ENCODE measurements at regions of chr6 and their contacts with region 1.

Region 1: GRCh38 chr6:16481697-16482399 is 243.5 kb downstream of the GMPR start:
- DNase-seq: peak; percentile 84
- ATAC-seq: peak; percentile 79
- H3K4me3 Mint-ChIP-seq: peak overlapping the region; percentile 6
- H3K27ac Mint-ChIP-seq: peak overlapping the region; percentile 96
- H3K4me1 Mint-ChIP-seq: peaks cover 86% of the 10 kb centered on the region
- H3K27me3 Mint-ChIP-seq: no peaks in the 10 kb centered on the region
- CTCF ChIP-seq: no peak

Region 2: DNA sequence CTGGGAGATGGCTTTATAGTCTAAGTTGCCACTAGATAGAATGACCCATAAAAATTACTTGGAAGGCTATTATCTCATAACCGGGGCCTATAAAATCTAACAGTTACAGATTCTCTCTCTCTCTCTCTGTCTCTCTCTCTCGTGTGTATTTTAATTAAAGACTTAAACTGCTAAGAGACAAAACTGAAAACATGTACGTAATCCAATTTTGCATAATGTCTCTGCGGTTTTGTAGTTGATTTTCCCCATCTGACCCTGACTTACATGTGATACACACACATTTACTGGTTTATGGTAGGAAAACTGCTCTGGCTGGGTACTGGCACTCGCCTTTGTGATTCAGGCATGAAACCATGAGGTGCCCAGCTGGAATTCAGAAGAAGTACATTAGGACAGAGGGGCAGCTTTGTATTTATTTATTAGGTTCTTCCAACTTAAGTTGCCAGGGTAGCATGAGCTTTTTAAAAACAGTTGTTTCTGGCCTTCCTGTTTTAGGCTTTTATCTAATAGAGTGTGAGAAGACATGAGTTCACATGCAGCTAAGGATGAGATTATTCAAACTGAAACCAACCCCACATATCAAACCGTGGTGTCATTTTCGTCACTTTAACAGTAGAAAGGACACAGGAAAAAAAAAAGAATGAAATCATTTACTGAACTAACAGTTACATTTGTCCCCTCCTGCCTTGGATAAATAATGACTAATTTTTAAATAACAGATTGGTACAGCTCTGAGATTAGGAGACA is 61.0 kb before region 1 on chr6:
- CTCF ChIA-PET with region 1: interaction called, 4 read pairs
- POLR2A ChIA-PET with region 1: interaction called, 4 read pairs
- intact Hi-C with region 1: loop called (anchors 5 kb)
- DNase-seq: peak; percentile 63
- ATAC-seq: peak; percentile 87
- H3K4me3 Mint-ChIP-seq: peak overlapping the region; percentile 25
- H3K27ac Mint-ChIP-seq: peak overlapping the region; percentile 96
- H3K4me1 Mint-ChIP-seq: peaks cover 41% of the 10 kb centered on the region
- H3K27me3 Mint-ChIP-seq: no peaks in the 10 kb centered on the region
- CTCF ChIP-seq: no peak

Region 3: DNA sequence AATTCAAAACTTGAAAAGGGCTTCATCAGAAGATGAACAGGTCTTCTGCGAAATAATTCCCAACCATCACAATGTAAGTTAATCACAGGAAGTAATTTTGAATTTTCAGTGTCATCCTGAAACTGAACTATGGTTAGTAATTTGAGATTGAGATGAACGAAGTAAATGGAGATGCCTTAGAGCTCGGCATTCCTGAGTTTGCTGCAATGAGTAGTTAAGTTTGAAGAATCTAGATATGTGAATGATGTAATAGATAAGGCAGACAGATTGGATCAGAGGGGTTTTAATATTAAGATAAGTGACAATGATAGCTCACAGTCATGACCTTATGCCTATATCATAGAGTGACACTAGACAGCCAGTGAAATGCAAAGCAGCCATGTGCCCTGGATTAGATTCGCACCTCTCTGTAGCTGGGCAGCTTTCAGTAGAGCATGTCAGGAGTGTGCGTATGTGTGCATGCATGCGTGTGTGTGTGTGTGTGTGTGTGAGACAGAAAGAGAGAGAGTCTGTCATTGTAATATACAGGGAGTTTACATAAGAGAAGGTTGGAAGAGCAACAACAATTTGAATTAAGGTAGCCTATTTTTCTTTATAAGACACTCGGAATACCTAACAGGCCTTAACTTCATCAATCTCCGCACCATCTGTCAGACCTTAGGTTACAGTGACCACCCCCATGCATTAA is 10.5 kb before region 1 on chr6:
- CTCF ChIA-PET with region 1: interaction called, 7 read pairs
- POLR2A ChIA-PET with region 1: interaction called, 16 read pairs
- intact Hi-C with region 1: no loop called
- DNase-seq: peak; percentile 55
- ATAC-seq: peak; percentile 51
- H3K4me3 Mint-ChIP-seq: no peak overlapping the region
- H3K27ac Mint-ChIP-seq: peak overlapping the region; percentile 86
- H3K4me1 Mint-ChIP-seq: peaks cover 78% of the 10 kb centered on the region
- H3K27me3 Mint-ChIP-seq: no peaks in the 10 kb centered on the region
- CTCF ChIP-seq: no peak

Region 4: GRCh38 chr6:16527691-16528090 is 45.8 kb after region 1 on chr6:
- CTCF ChIA-PET with region 1: no interaction called
- POLR2A ChIA-PET with region 1: no interaction called
- intact Hi-C with region 1: no loop called
- DNase-seq: no peak
- ATAC-seq: no peak
- H3K4me3 Mint-ChIP-seq: no peak overlapping the region
- H3K27ac Mint-ChIP-seq: no peak overlapping the region
- H3K4me1 Mint-ChIP-seq: peaks cover 20% of the 10 kb centered on the region
- H3K27me3 Mint-ChIP-seq: no peaks in the 10 kb centered on the region
- CTCF ChIP-seq: no peak

Region 5: GRCh38 chr6:16651871-16652270 is 170.0 kb after region 1 on chr6:
- CTCF ChIA-PET with region 1: no interaction called
- POLR2A ChIA-PET with region 1: no interaction called
- intact Hi-C with region 1: loop called (anchors 10 kb)
- DNase-seq: no peak
- ATAC-seq: peak; percentile 85
- H3K4me3 Mint-ChIP-seq: no peak overlapping the region
- H3K27ac Mint-ChIP-seq: peak overlapping the region; percentile 4
- H3K4me1 Mint-ChIP-seq: peaks cover 50% of the 10 kb centered on the region
- H3K27me3 Mint-ChIP-seq: no peaks in the 10 kb centered on the region
- CTCF ChIP-seq: no peak

Region 6: GRCh38 chr6:16956361-16956760 is 474.5 kb after region 1 on chr6:
- CTCF ChIA-PET with region 1: no interaction called
- POLR2A ChIA-PET with region 1: no interaction called
- intact Hi-C with region 1: loop called (anchors 10 kb)
- DNase-seq: peak; percentile 51
- ATAC-seq: peak; percentile 87
- H3K4me3 Mint-ChIP-seq: no peak overlapping the region
- H3K27ac Mint-ChIP-seq: peak overlapping the region; percentile 79
- H3K4me1 Mint-ChIP-seq: peaks cover 35% of the 10 kb centered on the region
- H3K27me3 Mint-ChIP-seq: peaks cover 15% of the 10 kb centered on the region
- CTCF ChIP-seq: no peak

Measured in activated CD8-positive, alpha-beta T cell treated with anti-CD3 and anti-CD28 coated beads for 36 hours (primary cell).